Naive thymus-derived CD4-positive, alpha-beta T cell (primary cell): ENCODE measurements at regions of chr10 and their contacts with region 1.

Region 1: GRCh38 chr10:62732841-62733653 is 71.5 kb upstream of the ADO start:
- DNase-seq: peak in 8 of 9 donors; percentile 54 to 83 (median 76)
- ATAC-seq: peak; percentile 92
- H3K4me3 ChIP-seq: no peak overlapping the region
- H3K4me3 Mint-ChIP-seq: peak overlapping the region in 7 of 10 donors; percentile 14 to 72 (median 65)
- H3K27ac ChIP-seq: peak overlapping the region; percentile 22
- H3K27ac Mint-ChIP-seq: peak overlapping the region in 2 of 9 donors; percentile 78 to 85
- H3K4me1 ChIP-seq: peaks cover 24 to 49% of the 10 kb centered on the region in 2 donors
- H3K4me1 Mint-ChIP-seq: peaks cover 0 to 17% (median 0%) of the 10 kb centered on the region in 7 donors
- H3K27me3 ChIP-seq: no peaks in the 10 kb centered on the region
- H3K27me3 Mint-ChIP-seq: peaks cover 0 to 14% (median 0%) of the 10 kb centered on the region in 5 donors

Region 2: GRCh38 chr10:62183442-62183841 is 549.6 kb before region 1 on chr10:
- CTCF ChIA-PET with region 1: no interaction called
- POLR2A ChIA-PET with region 1: no interaction called
- intact Hi-C with region 1: loop called in 1 of 2 experiments (anchors 5 kb)
- DNase-seq: peak in 8 of 9 donors; percentile 45 to 95 (median 90)
- ATAC-seq: peak; percentile 96
- H3K4me3 ChIP-seq: no peak overlapping the region
- H3K4me3 Mint-ChIP-seq: peak overlapping the region; percentile 10 to 77 (median 62)
- H3K27ac ChIP-seq: peak overlapping the region; percentile 74
- H3K27ac Mint-ChIP-seq: peak overlapping the region; percentile 84 to 98 (median 93)
- H3K4me1 ChIP-seq: peaks cover 36 to 67% of the 10 kb centered on the region in 2 donors
- H3K4me1 Mint-ChIP-seq: peaks cover 28 to 99% (median 87%) of the 10 kb centered on the region in 7 donors
- H3K27me3 ChIP-seq: no peaks in the 10 kb centered on the region
- H3K27me3 Mint-ChIP-seq: no peaks in the 10 kb centered on the region

Region 3: DNA sequence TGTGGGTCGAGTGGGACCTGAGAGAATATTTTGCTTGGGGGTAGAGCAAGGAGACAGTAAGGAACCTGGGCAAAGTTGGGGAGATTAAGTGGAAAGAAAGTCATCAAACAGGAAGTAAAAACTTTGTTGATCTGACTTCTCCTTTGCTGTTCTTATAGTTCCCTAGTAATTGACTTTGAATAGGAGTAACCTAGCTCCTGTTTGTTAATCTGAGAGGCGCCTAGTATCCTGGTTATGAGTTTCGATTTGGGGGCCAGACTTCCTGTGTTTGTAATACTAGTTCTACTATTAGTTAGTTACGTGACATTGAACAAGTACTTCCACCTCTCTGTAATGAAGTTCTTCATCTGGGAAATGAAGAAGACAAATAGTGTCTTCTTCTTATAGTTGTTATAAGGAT is 259.8 kb before region 1 on chr10:
- CTCF ChIA-PET with region 1: no interaction called
- POLR2A ChIA-PET with region 1: no interaction called
- intact Hi-C with region 1: no loop called
- DNase-seq: no peak
- ATAC-seq: no peak
- H3K4me3 ChIP-seq: no peak overlapping the region
- H3K4me3 Mint-ChIP-seq: no peak overlapping the region
- H3K27ac ChIP-seq: no peak overlapping the region
- H3K27ac Mint-ChIP-seq: no peak overlapping the region
- H3K4me1 ChIP-seq: no peaks in the 10 kb centered on the region
- H3K4me1 Mint-ChIP-seq: peaks cover 0 to 2% (median 0%) of the 10 kb centered on the region in 7 donors
- H3K27me3 ChIP-seq: no peaks in the 10 kb centered on the region
- H3K27me3 Mint-ChIP-seq: peaks cover 0 to 10% (median 5%) of the 10 kb centered on the region in 5 donors

Region 4: GRCh38 chr10:62632071-62632809 is 100.8 kb before region 1 on chr10:
- CTCF ChIA-PET with region 1: interaction called, 4 read pairs
- POLR2A ChIA-PET with region 1: interaction called, 11 read pairs
- intact Hi-C with region 1: loop called (anchors 1 kb)
- DNase-seq: peak in 8 of 9 donors; percentile 45 to 69 (median 54)
- ATAC-seq: peak; percentile 82
- H3K4me3 ChIP-seq: peak overlapping the region; percentile 19
- H3K4me3 Mint-ChIP-seq: peak overlapping the region in 4 of 10 donors; percentile 19 to 67 (median 45)
- H3K27ac ChIP-seq: no peak overlapping the region
- H3K27ac Mint-ChIP-seq: peak overlapping the region; percentile 3 to 89 (median 54)
- H3K4me1 ChIP-seq: peaks cover 15 to 29% of the 10 kb centered on the region in 2 donors
- H3K4me1 Mint-ChIP-seq: peaks cover 8 to 40% (median 15%) of the 10 kb centered on the region in 7 donors
- H3K27me3 ChIP-seq: no peaks in the 10 kb centered on the region
- H3K27me3 Mint-ChIP-seq: no peaks in the 10 kb centered on the region

Region 5: GRCh38 chr10:62643606-62644587 is 89.2 kb before region 1 on chr10:
- CTCF ChIA-PET with region 1: no interaction called
- POLR2A ChIA-PET with region 1: no interaction called
- intact Hi-C with region 1: no loop called
- DNase-seq: no peak
- ATAC-seq: no peak
- H3K4me3 ChIP-seq: no peak overlapping the region
- H3K4me3 Mint-ChIP-seq: no peak overlapping the region
- H3K27ac ChIP-seq: no peak overlapping the region
- H3K27ac Mint-ChIP-seq: no peak overlapping the region
- H3K4me1 ChIP-seq: peaks cover 0 to 3% of the 10 kb centered on the region in 2 donors
- H3K4me1 Mint-ChIP-seq: peaks cover 0 to 22% (median 0%) of the 10 kb centered on the region in 7 donors
- H3K27me3 ChIP-seq: no peaks in the 10 kb centered on the region
- H3K27me3 Mint-ChIP-seq: peaks cover 0 to 4% (median 0%) of the 10 kb centered on the region in 5 donors

Region 6: GRCh38 chr10:62689712-62690111 is 43.3 kb before region 1 on chr10:
- CTCF ChIA-PET with region 1: no interaction called
- POLR2A ChIA-PET with region 1: no interaction called
- intact Hi-C with region 1: loop called in 1 of 2 experiments (anchors 5 kb)
- DNase-seq: peak in 4 of 9 donors; percentile 12 to 24 (median 18)
- ATAC-seq: peak; percentile 43
- H3K4me3 ChIP-seq: peak overlapping the region; percentile 23
- H3K4me3 Mint-ChIP-seq: peak overlapping the region; percentile 6 to 79 (median 67)
- H3K27ac ChIP-seq: no peak overlapping the region
- H3K27ac Mint-ChIP-seq: peak overlapping the region in 7 of 9 donors; percentile 4 to 65 (median 50)
- H3K4me1 ChIP-seq: peaks cover 30 to 37% of the 10 kb centered on the region in 2 donors
- H3K4me1 Mint-ChIP-seq: peaks cover 27 to 57% (median 48%) of the 10 kb centered on the region in 7 donors
- H3K27me3 ChIP-seq: no peaks in the 10 kb centered on the region
- H3K27me3 Mint-ChIP-seq: no peaks in the 10 kb centered on the region

Region 7: GRCh38 chr10:62779487-62780248 is 46.6 kb after region 1 on chr10:
- CTCF ChIA-PET with region 1: interaction called, 3 read pairs
- POLR2A ChIA-PET with region 1: interaction called, 5 read pairs
- intact Hi-C with region 1: loop called (anchors 1 kb)
- DNase-seq: peak; percentile 35 to 88 (median 75)
- ATAC-seq: peak; percentile 97
- H3K4me3 ChIP-seq: no peak overlapping the region
- H3K4me3 Mint-ChIP-seq: peak overlapping the region; percentile 0 to 71 (median 52)
- H3K27ac ChIP-seq: no peak overlapping the region
- H3K27ac Mint-ChIP-seq: peak overlapping the region in 6 of 9 donors; percentile 0 to 79 (median 8)
- H3K4me1 ChIP-seq: peaks cover 13 to 15% of the 10 kb centered on the region in 2 donors
- H3K4me1 Mint-ChIP-seq: peaks cover 10 to 22% (median 17%) of the 10 kb centered on the region in 7 donors
- H3K27me3 ChIP-seq: no peaks in the 10 kb centered on the region
- H3K27me3 Mint-ChIP-seq: peaks cover 0 to 38% (median 0%) of the 10 kb centered on the region in 5 donors

Region 8: DNA sequence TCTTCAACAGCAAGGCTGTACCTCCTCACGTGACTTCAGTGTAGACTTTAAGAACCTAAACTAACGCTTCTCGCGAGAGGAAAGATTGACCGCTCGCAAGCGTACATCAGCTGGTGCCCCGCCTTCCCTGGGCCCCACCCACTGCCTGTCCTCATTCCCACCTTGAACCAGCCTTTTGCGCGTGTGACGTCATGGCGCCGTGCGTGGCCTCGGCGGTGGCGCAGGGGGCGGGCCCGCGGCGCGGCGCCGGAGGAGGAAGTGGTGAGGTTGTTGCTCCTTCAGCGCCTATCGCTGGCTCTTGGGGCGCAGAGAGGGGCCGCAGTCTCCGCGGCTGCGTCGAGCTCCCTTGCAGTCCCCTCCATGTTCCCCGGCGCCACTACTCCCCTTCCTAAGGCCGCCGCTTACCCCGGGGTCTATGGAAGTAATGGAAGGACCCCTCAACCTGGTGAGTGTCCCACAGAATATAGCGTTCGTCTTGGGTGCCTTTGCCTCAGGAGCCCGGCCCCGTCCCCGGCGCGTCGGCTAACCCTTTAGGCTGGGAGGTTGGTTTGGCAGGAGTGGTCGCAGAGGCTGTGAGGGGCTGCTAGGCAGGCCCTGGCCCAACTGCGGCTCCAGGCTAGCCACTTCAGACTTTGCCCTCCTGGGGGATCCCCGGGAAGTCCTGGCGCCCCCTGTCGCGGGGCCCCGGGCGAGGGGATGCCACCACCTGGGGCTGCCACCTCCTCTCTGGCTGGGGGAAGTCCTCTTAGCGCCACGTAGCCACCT is 400.2 kb after region 1 on chr10 and contains the start of gene NRBF2:
- CTCF ChIA-PET with region 1: no interaction called
- POLR2A ChIA-PET with region 1: no interaction called
- intact Hi-C with region 1: loop called in 1 of 2 experiments (anchors 10 kb)
- DNase-seq: peak; percentile 96 to 98 (median 98)
- ATAC-seq: peak; percentile 94
- H3K4me3 ChIP-seq: peak within 1 kb of the TSS; percentile 81
- H3K4me3 Mint-ChIP-seq: peak within 1 kb of the TSS; percentile 75 to 94 (median 92)
- H3K27ac ChIP-seq: peak within 1 kb of the TSS; percentile 98
- H3K27ac Mint-ChIP-seq: peak within 1 kb of the TSS; percentile 89 to 98 (median 96)
- H3K4me1 ChIP-seq: peaks cover 17 to 30% of the 10 kb centered on the region in 2 donors
- H3K4me1 Mint-ChIP-seq: peaks cover 10 to 49% (median 32%) of the 10 kb centered on the region in 7 donors
- H3K27me3 ChIP-seq: no peaks in the 10 kb centered on the region
- H3K27me3 Mint-ChIP-seq: no peaks in the 10 kb centered on the region
- total RNA-seq, gene NRBF2: 14.5 to 26.0 (median 19.2) TPM